ENCODE measurements at regions of chr16 and their contacts with region 1.

Region 1: DNA sequence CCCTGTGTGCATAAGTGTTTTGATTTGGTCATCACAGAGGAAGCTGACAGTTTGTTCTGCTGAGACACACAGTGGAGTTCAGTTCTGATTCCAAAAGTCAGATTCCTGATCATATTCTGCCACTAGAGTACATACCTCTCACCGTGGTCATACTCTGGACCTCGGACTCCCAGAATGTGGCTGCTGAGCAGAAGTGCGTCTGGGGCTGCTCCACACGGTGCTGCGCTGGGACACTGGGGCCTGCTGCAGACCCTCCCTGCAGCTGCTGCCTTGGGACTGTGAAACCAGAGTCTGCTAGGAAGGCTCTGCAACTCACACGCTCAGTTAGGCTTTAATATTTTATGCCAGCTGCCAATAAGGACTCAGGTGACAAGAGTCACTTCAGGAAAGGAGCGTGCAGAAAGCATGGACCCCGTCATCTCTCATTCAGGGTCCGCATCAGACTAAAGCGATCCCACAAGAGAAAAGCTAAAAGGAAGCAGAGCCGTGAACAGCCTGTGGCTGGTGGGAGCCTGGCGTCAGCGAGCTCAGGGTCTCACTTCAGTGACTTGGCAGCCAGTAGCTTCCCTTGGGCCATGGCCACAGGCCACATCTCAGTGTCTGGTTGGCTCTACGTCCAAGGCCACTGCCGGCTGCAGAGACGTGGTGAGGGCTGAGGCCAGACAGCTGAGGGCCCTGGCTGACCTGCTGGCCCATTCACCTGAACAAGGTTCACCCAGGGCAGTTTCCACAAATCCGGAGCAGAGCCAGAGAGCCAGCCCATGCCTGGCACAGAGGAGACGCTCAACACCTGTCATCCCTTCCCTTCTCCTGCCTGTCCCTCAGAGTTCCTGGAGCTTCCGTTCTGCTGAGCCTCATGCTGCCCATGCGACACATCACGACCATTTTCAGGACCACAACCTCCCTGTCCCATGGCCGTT is 24.7 kb upstream of the KIFC3 start:
- DNase-seq: no peak
- ATAC-seq: peak; percentile 53

Region 2: GRCh38 chr16:57786632-57787518 is 40.1 kb before region 1 on chr16:
- intact Hi-C with region 1: loop called (anchors 5 kb)
- DNase-seq: peak; percentile 82
- ATAC-seq: peak; percentile 90

Region 3: DNA sequence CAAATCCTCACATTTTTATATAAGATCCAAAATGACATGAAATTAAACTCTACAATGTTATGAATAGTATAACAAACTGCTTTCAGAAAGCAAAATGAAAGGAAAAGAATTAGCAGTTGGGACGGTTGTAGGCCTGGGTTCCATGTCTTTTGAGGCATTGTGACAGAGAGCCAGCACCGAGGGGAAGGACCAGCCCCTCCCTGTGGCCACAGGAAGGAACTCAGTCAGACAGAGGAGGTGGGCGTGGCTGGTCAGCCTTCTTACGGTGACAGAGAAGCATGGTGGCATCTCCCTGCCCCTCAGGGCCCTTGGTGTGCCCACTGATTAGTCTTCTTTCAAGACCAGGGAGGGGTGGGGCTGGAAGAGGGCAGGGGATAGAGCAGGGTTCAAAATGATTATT is 167.8 kb after region 1 on chr16:
- intact Hi-C with region 1: no loop called
- DNase-seq: peak; percentile 90
- ATAC-seq: peak; percentile 30

Measured in Right ventricle myocardium inferior (tissue), 1 donor.